H1 (cell line): ENCODE measurements at regions of chr12 and their contacts with region 1.

Region 1: DNA sequence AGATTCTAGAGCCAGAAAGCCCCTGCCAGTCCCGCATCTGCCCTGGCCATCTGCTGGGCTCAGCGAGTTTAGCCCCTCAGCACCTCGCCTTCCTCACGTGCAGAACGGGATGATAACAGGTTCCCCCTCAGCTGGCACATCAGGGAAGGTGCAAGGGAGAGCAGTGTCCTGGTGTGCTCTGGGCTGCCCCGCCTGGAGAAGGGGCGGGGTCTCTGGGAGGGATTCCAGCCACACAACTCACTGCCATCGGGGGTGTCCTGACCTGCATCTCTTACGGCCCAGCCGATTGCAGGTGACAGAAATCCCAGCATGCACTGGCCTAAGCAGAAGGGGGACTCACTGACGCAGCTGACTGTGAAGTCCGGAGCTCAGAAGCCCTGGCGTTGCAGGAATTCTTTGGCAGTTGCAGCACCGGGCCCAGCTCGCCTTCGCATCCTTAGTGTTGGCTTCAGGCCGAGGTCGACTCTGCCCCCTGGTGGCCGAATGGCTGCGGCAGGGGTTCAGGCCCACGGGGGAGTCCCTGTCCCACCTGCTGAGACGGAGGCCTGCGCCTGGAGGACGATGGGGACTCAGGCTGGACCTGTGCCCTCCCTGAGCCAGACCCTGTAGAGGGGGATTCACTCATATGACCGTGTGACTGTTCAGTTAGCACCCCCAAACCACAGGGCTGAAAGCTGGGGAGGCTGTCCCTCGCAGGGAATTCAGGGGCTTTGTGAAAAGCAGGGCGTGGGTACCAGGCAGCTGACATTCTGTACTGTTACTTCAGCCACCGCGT is 178.6 kb downstream of the ADGRD1 start:
- DNase-seq: peak; percentile 61 to 96
- H3K4me3 ChIP-seq: peak overlapping the region in 1 of 4 experiments; percentile 45; a peak in 4 of 8 replicates
- H3K27ac ChIP-seq: no peak overlapping the region
- H3K4me1 ChIP-seq: peaks cover 0 to 5% (median 2%) of the 10 kb centered on the region in 4 experiments; a peak in 1 of 7 replicates
- H3K27me3 ChIP-seq: peaks cover 0 to 2% (median 0%) of the 10 kb centered on the region in 4 experiments; a peak in 1 of 7 replicates
- CTCF ChIP-seq: peak; percentile 82 to 93 (median 90)
- EP300 ChIP-seq: no peak
- POLR2A ChIP-seq: no peak
- RAD21 ChIP-seq: peak; percentile 77 to 87

Region 2: GRCh38 chr12:130916251-130916911 is 215.9 kb before region 1 on chr12:
- CTCF ChIA-PET with region 1: interaction called, 41 read pairs
- POLR2A ChIA-PET with region 1: interaction called, 3 read pairs
- DNase-seq: peak; percentile 53 to 75
- H3K4me3 ChIP-seq: peak overlapping the region in 1 of 4 experiments; percentile 22; a peak in 1 of 8 replicates
- H3K27ac ChIP-seq: no peak overlapping the region
- H3K4me1 ChIP-seq: peaks cover 0 to 2% (median 0%) of the 10 kb centered on the region in 4 experiments; a peak in 2 of 7 replicates
- H3K27me3 ChIP-seq: no peaks in the 10 kb centered on the region; a peak in 1 of 7 replicates
- CTCF ChIP-seq: peak; percentile 95 to 98 (median 96)
- EP300 ChIP-seq: 0 out of 3 replicates have a peak, but pooled peaks of 1 of the 2 experiments have one; percentile 28
- POLR2A ChIP-seq: no peak
- RAD21 ChIP-seq: peak; percentile 98 to 100

Region 3: DNA sequence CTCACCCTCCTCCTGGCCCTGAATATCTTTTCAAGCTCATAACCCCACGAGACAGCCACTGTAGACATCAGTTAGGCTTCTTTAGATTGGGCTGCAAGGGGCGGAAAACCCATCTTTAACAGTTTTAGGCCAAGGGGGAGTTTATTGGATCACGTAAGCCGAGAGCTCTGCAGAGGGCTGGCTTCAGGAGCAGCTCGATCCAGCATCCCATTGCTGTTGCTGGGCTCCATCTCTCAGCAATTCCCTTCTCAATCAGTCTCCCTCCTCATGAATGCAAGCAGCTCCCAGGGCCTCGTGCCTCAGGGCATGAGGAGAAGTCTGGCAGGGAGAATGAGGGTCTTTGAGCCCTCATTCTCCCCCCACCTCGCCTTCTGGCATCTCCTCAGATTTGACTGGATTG is 119.2 kb before region 1 on chr12:
- CTCF ChIA-PET with region 1: no interaction called
- POLR2A ChIA-PET with region 1: no interaction called
- DNase-seq: no peak
- H3K4me3 ChIP-seq: no peak overlapping the region
- H3K27ac ChIP-seq: no peak overlapping the region
- H3K4me1 ChIP-seq: peaks cover 0 to 2% (median under 1%) of the 10 kb centered on the region in 4 experiments; a peak in 1 of 7 replicates
- H3K27me3 ChIP-seq: peaks cover 0 to 2% (median 0%) of the 10 kb centered on the region in 4 experiments; a peak in 1 of 7 replicates
- CTCF ChIP-seq: no peak
- EP300 ChIP-seq: no peak
- POLR2A ChIP-seq: no peak
- RAD21 ChIP-seq: no peak

Region 4: GRCh38 chr12:131116391-131117117 is 15.8 kb before region 1 on chr12:
- CTCF ChIA-PET with region 1: interaction called, 196 read pairs
- POLR2A ChIA-PET with region 1: no interaction called
- DNase-seq: peak in 1 of 2 experiments; percentile 75
- H3K4me3 ChIP-seq: no peak overlapping the region
- H3K27ac ChIP-seq: no peak overlapping the region
- H3K4me1 ChIP-seq: peaks cover 0 to 7% (median 3%) of the 10 kb centered on the region in 4 experiments; a peak in 4 of 7 replicates
- H3K27me3 ChIP-seq: no peaks in the 10 kb centered on the region; a peak in 1 of 7 replicates
- CTCF ChIP-seq: peak; percentile 81 to 91 (median 87)
- EP300 ChIP-seq: no peak
- POLR2A ChIP-seq: no peak
- RAD21 ChIP-seq: peak; percentile 90 to 93

Region 5: DNA sequence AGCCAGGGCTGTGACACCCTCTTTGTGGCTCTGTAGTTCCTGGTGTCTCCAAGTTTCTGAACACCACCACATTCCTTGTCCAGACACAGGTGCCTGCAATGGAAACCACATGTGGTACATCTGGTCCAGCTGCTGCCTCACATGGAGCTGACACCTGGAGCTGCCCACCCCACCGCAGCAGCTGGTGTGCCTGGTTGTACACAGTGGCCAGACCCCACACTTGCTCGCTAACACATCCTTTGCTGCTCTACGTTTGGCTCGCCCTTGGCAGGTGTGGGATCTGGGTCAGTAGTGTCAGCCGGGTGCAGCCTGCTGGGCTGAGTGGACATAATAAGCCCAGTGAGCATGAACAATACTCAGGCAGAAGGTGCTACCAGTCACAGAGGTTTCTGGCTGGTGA is 20.3 kb after region 1 on chr12:
- CTCF ChIA-PET with region 1: interaction called, 25 read pairs
- POLR2A ChIA-PET with region 1: no interaction called
- DNase-seq: no peak
- H3K4me3 ChIP-seq: no peak overlapping the region
- H3K27ac ChIP-seq: no peak overlapping the region
- H3K4me1 ChIP-seq: no peaks in the 10 kb centered on the region
- H3K27me3 ChIP-seq: no peaks in the 10 kb centered on the region
- CTCF ChIP-seq: no peak
- EP300 ChIP-seq: no peak
- POLR2A ChIP-seq: no peak
- RAD21 ChIP-seq: no peak

Region 6: GRCh38 chr12:131229426-131230339 is 97.4 kb after region 1 on chr12:
- CTCF ChIA-PET with region 1: interaction called, 10 read pairs
- POLR2A ChIA-PET with region 1: no interaction called
- DNase-seq: peak in 1 of 2 experiments; percentile 63
- H3K4me3 ChIP-seq: peak overlapping the region in 1 of 4 experiments; percentile 20; a peak in 2 of 8 replicates
- H3K27ac ChIP-seq: peak overlapping the region; percentile 51; the same call in 1 of the 2 replicates
- H3K4me1 ChIP-seq: peaks cover 0 to 21% (median 11%) of the 10 kb centered on the region in 4 experiments; a peak in 5 of 7 replicates
- H3K27me3 ChIP-seq: no peaks in the 10 kb centered on the region
- CTCF ChIP-seq: peak; percentile 55 to 66 (median 60)
- EP300 ChIP-seq: no peak
- POLR2A ChIP-seq: no peak; a peak in 1 of 3 replicates
- RAD21 ChIP-seq: peak; percentile 15 to 44; a peak in 1 of 4 replicates